Mammary epithelial cell (primary cell): ENCODE measurements at regions of chr10 and their contacts with region 1.

Region 1: GRCh38 chr10:51368939-51369338 is 294.7 kb downstream of the PRKG1 start:
- DNase-seq: no peak
- H3K4me3 ChIP-seq: no peak overlapping the region
- H3K27ac ChIP-seq: no peak overlapping the region
- H3K4me1 ChIP-seq: no peaks in the 10 kb centered on the region
- H3K27me3 ChIP-seq: no peaks in the 10 kb centered on the region
- CTCF ChIP-seq: peak in 1 of 2 donors; percentile 9

Region 2: DNA sequence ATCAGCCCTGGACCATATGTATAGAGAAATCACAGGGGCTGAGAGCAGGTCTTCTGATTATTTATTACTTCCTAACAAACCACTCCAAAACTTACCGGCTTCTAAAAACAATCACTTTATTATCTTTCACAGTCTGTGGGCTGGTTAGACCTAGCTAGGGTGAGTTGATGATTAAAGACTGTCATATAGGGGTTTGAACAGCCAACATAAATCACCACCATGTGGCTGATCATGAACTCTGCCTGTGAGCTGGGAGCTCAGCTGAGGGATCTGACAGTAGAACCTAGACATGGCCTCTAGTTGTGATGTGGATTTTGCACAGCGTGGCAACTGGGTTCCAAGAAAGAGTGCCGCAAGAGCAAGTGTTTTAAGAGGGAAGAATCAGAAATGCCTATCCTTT is 25.1 kb after region 1 on chr10:
- CTCF ChIA-PET with region 1: no interaction called
- dilution Hi-C with region 1: no loop called
- in situ Hi-C with region 1: no loop called
- intact Hi-C with region 1: no loop called
- DNase-seq: no peak
- H3K4me3 ChIP-seq: no peak overlapping the region
- H3K27ac ChIP-seq: no peak overlapping the region
- H3K4me1 ChIP-seq: peaks cover 3% of the 10 kb centered on the region
- H3K27me3 ChIP-seq: no peaks in the 10 kb centered on the region
- CTCF ChIP-seq: no peak

Region 3: GRCh38 chr10:51406581-51406980 is 37.6 kb after region 1 on chr10:
- CTCF ChIA-PET with region 1: no interaction called
- dilution Hi-C with region 1: no loop called
- in situ Hi-C with region 1: no loop called
- intact Hi-C with region 1: loop called (anchors 1 kb)
- DNase-seq: no peak
- H3K4me3 ChIP-seq: no peak overlapping the region
- H3K27ac ChIP-seq: no peak overlapping the region
- H3K4me1 ChIP-seq: no peaks in the 10 kb centered on the region
- H3K27me3 ChIP-seq: no peaks in the 10 kb centered on the region
- CTCF ChIP-seq: no peak

Region 4: DNA sequence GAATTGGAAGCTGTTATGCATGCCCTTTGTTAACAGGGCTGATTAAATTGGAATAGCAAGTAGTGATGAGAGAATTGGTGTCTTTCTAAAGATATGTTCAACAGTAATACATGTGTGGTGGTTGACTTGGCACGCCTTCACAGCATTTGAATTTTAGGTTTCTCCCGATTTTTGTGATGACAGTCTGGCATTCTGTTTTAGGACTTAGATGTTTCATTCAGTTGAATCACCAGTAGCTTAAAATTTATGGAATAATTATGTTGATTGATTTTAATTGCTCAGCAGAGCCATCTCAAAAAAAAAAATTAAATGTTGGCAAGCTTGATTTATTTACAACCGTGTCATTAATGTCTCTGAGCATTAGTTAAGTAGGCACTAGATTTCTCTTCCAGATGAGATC is 110.8 kb after region 1 on chr10:
- CTCF ChIA-PET with region 1: no interaction called
- dilution Hi-C with region 1: no loop called
- in situ Hi-C with region 1: no loop called
- intact Hi-C with region 1: no loop called
- DNase-seq: no peak
- H3K4me3 ChIP-seq: no peak overlapping the region
- H3K27ac ChIP-seq: no peak overlapping the region
- H3K4me1 ChIP-seq: no peaks in the 10 kb centered on the region
- H3K27me3 ChIP-seq: no peaks in the 10 kb centered on the region
- CTCF ChIP-seq: no peak

Region 5: GRCh38 chr10:51564896-51565510 is 196.1 kb after region 1 on chr10:
- CTCF ChIA-PET with region 1: no interaction called
- dilution Hi-C with region 1: no loop called
- in situ Hi-C with region 1: no loop called
- intact Hi-C with region 1: no loop called
- DNase-seq: no peak
- H3K4me3 ChIP-seq: no peak overlapping the region
- H3K27ac ChIP-seq: no peak overlapping the region
- H3K4me1 ChIP-seq: no peaks in the 10 kb centered on the region
- H3K27me3 ChIP-seq: no peaks in the 10 kb centered on the region
- CTCF ChIP-seq: no peak